ENCODE measurements at regions of chr3 and their contacts with region 1.

Region 1: GRCh38 chr3:25648107-25648535 is 16.6 kb downstream of the TOP2B start:
- DNase-seq: peak; percentile 6
- H3K4me3 ChIP-seq: no peak overlapping the region
- H3K27ac ChIP-seq: no peak overlapping the region
- H3K4me1 ChIP-seq: peaks cover 0 to 32% (median 5%) of the 10 kb centered on the region in 3 donors
- H3K27me3 ChIP-seq: no peaks in the 10 kb centered on the region
- CTCF ChIP-seq: peak; percentile 76 to 96 (median 88)
- POLR2A ChIP-seq: no peak

Region 2: DNA sequence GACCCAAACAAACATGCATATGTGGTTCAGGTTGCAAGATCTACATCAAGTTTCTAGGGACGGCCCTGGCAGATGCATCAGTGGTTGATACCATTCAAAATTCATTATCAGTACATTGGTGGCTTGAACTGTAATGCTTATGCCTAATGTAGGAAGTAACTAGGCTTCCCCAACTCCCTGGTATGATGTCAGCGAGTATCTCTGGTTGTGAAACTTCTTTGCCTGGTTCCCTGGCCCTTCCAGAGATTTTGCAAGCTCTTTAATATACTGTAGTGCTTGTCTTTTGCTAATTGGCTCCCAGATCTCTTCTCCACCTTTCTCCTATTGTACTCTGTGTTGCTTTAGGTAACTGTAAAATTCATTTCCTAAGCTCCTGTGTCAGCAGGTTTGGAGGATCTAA is 334.8 kb before region 1 on chr3:
- intact Hi-C with region 1: no loop called
- DNase-seq: no peak
- H3K4me3 ChIP-seq: no peak overlapping the region
- H3K27ac ChIP-seq: no peak overlapping the region
- H3K4me1 ChIP-seq: no peaks in the 10 kb centered on the region
- H3K27me3 ChIP-seq: no peaks in the 10 kb centered on the region
- CTCF ChIP-seq: no peak
- POLR2A ChIP-seq: no peak

Region 3: DNA sequence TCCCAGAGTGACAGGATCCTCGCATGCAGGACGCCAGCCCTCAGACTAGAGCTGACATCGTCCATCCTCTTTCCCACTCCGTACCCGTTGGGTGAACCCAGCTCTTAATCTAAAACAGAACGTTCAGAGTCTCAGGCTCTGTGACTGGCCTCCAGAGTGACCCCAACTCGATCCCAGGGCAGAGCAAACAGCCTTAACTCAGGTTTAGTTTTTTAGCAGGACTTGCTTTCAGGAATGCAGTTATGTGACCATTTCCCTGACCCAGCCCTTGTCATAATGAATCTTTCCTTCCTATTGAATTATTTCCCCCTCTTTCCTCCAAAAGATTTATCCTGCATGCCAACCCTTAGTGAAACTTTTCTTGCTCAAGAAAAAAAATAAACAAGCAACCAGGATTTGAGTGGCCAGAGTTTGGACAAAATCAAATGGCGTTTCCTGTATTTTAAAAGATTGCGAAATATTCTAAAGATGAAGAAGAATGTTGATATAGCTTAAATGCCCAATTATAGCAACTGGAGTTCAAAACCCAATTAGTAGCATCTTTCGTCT is 267.8 kb before region 1 on chr3:
- intact Hi-C with region 1: no loop called
- DNase-seq: no peak
- H3K4me3 ChIP-seq: no peak overlapping the region
- H3K27ac ChIP-seq: peak overlapping the region in 1 of 4 donors; percentile 14
- H3K4me1 ChIP-seq: peaks cover 0 to 11% (median 0%) of the 10 kb centered on the region in 3 donors
- H3K27me3 ChIP-seq: no peaks in the 10 kb centered on the region
- CTCF ChIP-seq: no peak
- POLR2A ChIP-seq: no peak

Region 4: GRCh38 chr3:25695731-25696420 is 47.8 kb after region 1 on chr3:
- intact Hi-C with region 1: no loop called
- DNase-seq: no peak
- H3K4me3 ChIP-seq: no peak overlapping the region
- H3K27ac ChIP-seq: no peak overlapping the region
- H3K4me1 ChIP-seq: peaks cover 0 to 18% (median 7%) of the 10 kb centered on the region in 3 donors
- H3K27me3 ChIP-seq: no peaks in the 10 kb centered on the region
- CTCF ChIP-seq: no peak
- POLR2A ChIP-seq: no peak

Region 5: DNA sequence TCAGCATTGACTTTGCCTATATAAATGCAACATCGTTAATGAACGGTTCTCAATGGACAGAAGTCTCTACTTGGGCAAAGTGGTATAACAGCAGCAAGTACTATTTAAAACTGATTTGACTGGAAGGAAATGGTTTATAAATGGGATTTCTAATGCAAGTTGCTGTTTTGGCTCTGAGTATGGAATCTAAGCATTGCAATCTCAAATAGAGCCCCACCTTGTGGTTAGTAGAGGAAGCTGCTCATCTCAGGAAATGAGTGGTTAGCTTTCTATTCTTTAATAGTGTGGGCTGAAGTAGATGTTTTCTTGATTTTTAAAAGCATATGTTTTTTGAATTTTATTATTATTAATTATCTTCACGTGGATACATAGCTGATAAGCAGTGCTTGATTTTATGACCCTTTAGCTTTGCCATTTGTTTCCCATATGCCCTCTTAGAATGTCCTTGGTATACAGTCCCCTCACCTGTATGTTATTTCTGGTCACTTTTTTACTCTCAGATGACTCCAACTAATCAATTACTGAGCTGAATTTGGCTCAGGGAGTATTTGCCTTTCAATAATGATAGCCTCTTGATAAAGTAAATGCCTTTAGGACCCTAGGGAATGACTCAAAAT is 208.9 kb after region 1 on chr3:
- intact Hi-C with region 1: loop called (anchors 5 kb)
- DNase-seq: no peak
- H3K4me3 ChIP-seq: no peak overlapping the region
- H3K27ac ChIP-seq: no peak overlapping the region
- H3K4me1 ChIP-seq: peaks cover 4 to 23% (median 6%) of the 10 kb centered on the region in 3 donors
- H3K27me3 ChIP-seq: no peaks in the 10 kb centered on the region
- CTCF ChIP-seq: peak; percentile 44 to 73 (median 58)
- POLR2A ChIP-seq: no peak

Measured in esophagus squamous epithelium (tissue), 5 donors.